Activated naive CD4-positive, alpha-beta T cell treated with anti-CD3 and anti-CD28 coated beads for 36 hours (primary cell): ENCODE measurements at regions of chr15 and their contacts with region 1.

Region 1: GRCh38 chr15:75453703-75454470 is 2.4 kb upstream of the SIN3A start:
- DNase-seq: peak; percentile 98
- H3K4me3 Mint-ChIP-seq: peak overlapping the region; percentile 98
- H3K27ac Mint-ChIP-seq: peak overlapping the region; percentile 98
- H3K4me1 Mint-ChIP-seq: peaks cover 24% of the 10 kb centered on the region
- H3K27me3 Mint-ChIP-seq: no peaks in the 10 kb centered on the region

Region 2: GRCh38 chr15:74402873-74403587 is 1050.9 kb before region 1 on chr15:
- CTCF ChIA-PET with region 1: no interaction called
- intact Hi-C with region 1: loop called (anchors 2 kb)
- DNase-seq: peak; percentile 97
- H3K4me3 Mint-ChIP-seq: peak overlapping the region; percentile 53
- H3K27ac Mint-ChIP-seq: peak overlapping the region; percentile 87
- H3K4me1 Mint-ChIP-seq: peaks cover 65% of the 10 kb centered on the region
- H3K27me3 Mint-ChIP-seq: no peaks in the 10 kb centered on the region

Region 3: GRCh38 chr15:74695597-74696397 is 758.1 kb before region 1 on chr15 and contains the start of gene EDC3:
- CTCF ChIA-PET with region 1: no interaction called
- intact Hi-C with region 1: loop called (anchors 5 kb)
- DNase-seq: peak; percentile 89
- H3K4me3 Mint-ChIP-seq: peak within 1 kb of the TSS; percentile 100
- H3K27ac Mint-ChIP-seq: peak within 1 kb of the TSS; percentile 98
- H3K4me1 Mint-ChIP-seq: peaks cover 40% of the 10 kb centered on the region
- H3K27me3 Mint-ChIP-seq: no peaks in the 10 kb centered on the region
- total RNA-seq, gene EDC3: 33.8 to 37.8 TPM

Region 4: GRCh38 chr15:74937596-74938296 is 516.1 kb before region 1 on chr15 and contains the start of gene COX5A:
- CTCF ChIA-PET with region 1: no interaction called
- intact Hi-C with region 1: loop called (anchors 2 kb)
- DNase-seq: peak; percentile 95
- H3K4me3 Mint-ChIP-seq: peak within 1 kb of the TSS; percentile 90
- H3K27ac Mint-ChIP-seq: peak within 1 kb of the TSS; percentile 89
- H3K4me1 Mint-ChIP-seq: peaks cover 33% of the 10 kb centered on the region
- H3K27me3 Mint-ChIP-seq: no peaks in the 10 kb centered on the region
- total RNA-seq, gene COX5A: 346 to 348 TPM

Region 5: GRCh38 chr15:75367913-75368688 is 85.8 kb before region 1 on chr15 and contains the start of gene MAN2C1:
- CTCF ChIA-PET with region 1: interaction called, 30 read pairs
- intact Hi-C with region 1: loop called (anchors 1 kb)
- DNase-seq: peak; percentile 96
- H3K4me3 Mint-ChIP-seq: peak within 1 kb of the TSS; percentile 90
- H3K27ac Mint-ChIP-seq: peak within 1 kb of the TSS; percentile 94
- H3K4me1 Mint-ChIP-seq: peaks cover 27% of the 10 kb centered on the region
- H3K27me3 Mint-ChIP-seq: no peaks in the 10 kb centered on the region
- total RNA-seq, gene MAN2C1: 228 to 247 TPM

Region 6: GRCh38 chr15:75468913-75469598 is 15.2 kb after region 1 on chr15:
- CTCF ChIA-PET with region 1: no interaction called
- intact Hi-C with region 1: no loop called
- DNase-seq: no peak
- H3K4me3 Mint-ChIP-seq: no peak overlapping the region
- H3K27ac Mint-ChIP-seq: peak overlapping the region; percentile 38
- H3K4me1 Mint-ChIP-seq: no peaks in the 10 kb centered on the region
- H3K27me3 Mint-ChIP-seq: no peaks in the 10 kb centered on the region

Region 7: GRCh38 chr15:75479670-75480069 is 25.8 kb after region 1 on chr15:
- CTCF ChIA-PET with region 1: no interaction called
- intact Hi-C with region 1: no loop called
- DNase-seq: no peak
- H3K4me3 Mint-ChIP-seq: no peak overlapping the region
- H3K27ac Mint-ChIP-seq: no peak overlapping the region
- H3K4me1 Mint-ChIP-seq: no peaks in the 10 kb centered on the region
- H3K27me3 Mint-ChIP-seq: no peaks in the 10 kb centered on the region

Region 8: GRCh38 chr15:75639709-75640482 is 186.0 kb after region 1 on chr15 and contains the start of gene IMP3:
- CTCF ChIA-PET with region 1: interaction called, 12 read pairs
- intact Hi-C with region 1: loop called (anchors 1 kb)
- DNase-seq: peak; percentile 97
- H3K4me3 Mint-ChIP-seq: peak within 1 kb of the TSS; percentile 95
- H3K27ac Mint-ChIP-seq: peak within 1 kb of the TSS; percentile 91
- H3K4me1 Mint-ChIP-seq: peaks cover 30% of the 10 kb centered on the region
- H3K27me3 Mint-ChIP-seq: no peaks in the 10 kb centered on the region
- total RNA-seq, gene IMP3: 46.1 to 46.8 TPM

Region 9: GRCh38 chr15:75903331-75904239 is 449.7 kb after region 1 on chr15 and contains the start of gene FBXO22:
- CTCF ChIA-PET with region 1: no interaction called
- intact Hi-C with region 1: loop called (anchors 5 kb)
- DNase-seq: peak; percentile 95
- H3K4me3 Mint-ChIP-seq: peak within 1 kb of the TSS; percentile 93
- H3K27ac Mint-ChIP-seq: peak within 1 kb of the TSS; percentile 90
- H3K4me1 Mint-ChIP-seq: peaks cover 45% of the 10 kb centered on the region
- H3K27me3 Mint-ChIP-seq: no peaks in the 10 kb centered on the region
- total RNA-seq, gene FBXO22: 97.3 to 99.6 TPM